Heart right ventricle (tissue), 16 donors: ENCODE measurements at regions of chr1 and their contacts with region 1.

Region 1: DNA sequence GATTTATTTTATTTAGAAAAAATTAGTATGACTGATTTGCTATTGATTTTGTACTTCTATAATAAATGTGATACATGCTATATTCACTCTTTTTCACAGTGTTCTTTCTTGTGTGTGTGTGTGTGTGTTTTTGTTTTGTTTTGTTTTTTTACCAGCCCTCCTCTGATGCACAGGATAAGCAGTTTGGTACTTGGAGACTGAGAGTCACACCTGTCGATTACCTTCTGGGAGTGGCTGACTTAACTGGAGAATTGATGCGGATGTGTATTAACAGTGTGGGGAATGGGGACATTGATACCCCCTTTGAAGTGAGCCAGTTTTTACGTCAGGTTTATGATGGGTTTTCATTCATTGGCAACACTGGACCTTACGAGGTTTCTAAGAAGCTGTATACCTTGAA is 35.9 kb downstream of the TSNAX start:
- DNase-seq: no peak
- ATAC-seq: no peak
- H3K4me3 ChIP-seq: no peak overlapping the region
- H3K27ac ChIP-seq: no peak overlapping the region
- H3K4me1 ChIP-seq: no peaks in the 10 kb centered on the region
- H3K27me3 ChIP-seq: no peaks in the 10 kb centered on the region
- CTCF ChIP-seq: no peak

Region 2: GRCh38 chr1:231528172-231529029 is 36.0 kb before region 1 on chr1 and contains the start of gene TSNAX:
- intact Hi-C with region 1: loop called in 1 of 10 experiments (anchors 2 kb)
- DNase-seq: peak; percentile 91 to 92
- ATAC-seq: peak; percentile 99
- H3K4me3 ChIP-seq: peak within 1 kb of the TSS; percentile 59 to 85 (median 74)
- H3K27ac ChIP-seq: peak within 1 kb of the TSS; percentile 87 to 97 (median 92)
- H3K4me1 ChIP-seq: peaks cover 2 to 63% (median 42%) of the 10 kb centered on the region in 9 donors
- H3K27me3 ChIP-seq: no peaks in the 10 kb centered on the region
- CTCF ChIP-seq: no peak
- total RNA-seq, gene TSNAX: 26.2 to 37.9 (median 33.2) TPM

Region 3: GRCh38 chr1:231636157-231636556 is 71.8 kb after region 1 on chr1:
- intact Hi-C with region 1: no loop called
- DNase-seq: no peak
- ATAC-seq: peak in 3 of 8 donors; percentile 35 to 71 (median 49)
- H3K4me3 ChIP-seq: no peak overlapping the region
- H3K27ac ChIP-seq: no peak overlapping the region
- H3K4me1 ChIP-seq: peaks cover 0 to 5% (median 0%) of the 10 kb centered on the region in 9 donors
- H3K27me3 ChIP-seq: no peaks in the 10 kb centered on the region
- CTCF ChIP-seq: no peak

Region 4: DNA sequence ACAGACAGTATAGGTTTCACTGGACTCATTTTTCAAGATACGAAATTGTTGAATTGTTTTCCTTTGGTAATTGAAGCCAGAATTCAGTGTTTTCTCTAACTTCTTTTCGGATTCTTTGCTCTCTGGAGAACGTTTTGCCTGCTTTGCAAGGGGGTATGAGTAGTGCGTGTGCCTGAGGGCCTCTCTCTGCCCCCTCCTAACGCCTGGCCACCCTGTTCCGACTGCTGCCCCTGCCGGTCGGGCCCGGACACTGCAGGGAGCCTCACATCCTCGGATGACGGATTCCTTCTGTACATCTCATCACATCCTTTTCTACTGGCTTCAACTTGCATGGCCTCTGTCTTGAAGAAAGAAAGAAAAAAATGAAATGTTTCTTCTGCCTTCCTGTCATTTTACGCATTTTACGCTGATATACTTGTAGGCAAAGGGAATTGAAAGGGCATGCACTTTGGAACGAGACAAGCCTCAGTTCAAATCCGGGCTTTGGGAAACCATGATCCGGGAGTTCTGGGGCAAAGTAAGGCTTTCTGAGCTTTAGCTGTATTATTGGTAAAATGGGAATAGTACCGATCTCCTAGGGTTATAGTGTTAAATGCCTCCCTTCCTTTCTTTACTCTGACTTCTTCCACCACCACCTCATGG is 127.4 kb after region 1 on chr1:
- intact Hi-C with region 1: no loop called
- DNase-seq: peak; percentile 21 to 51
- ATAC-seq: peak; percentile 50 to 79 (median 66)
- H3K4me3 ChIP-seq: no peak overlapping the region
- H3K27ac ChIP-seq: no peak overlapping the region
- H3K4me1 ChIP-seq: peaks cover 0 to 54% (median 21%) of the 10 kb centered on the region in 9 donors
- H3K27me3 ChIP-seq: no peaks in the 10 kb centered on the region
- CTCF ChIP-seq: peak; percentile 41 to 73 (median 63)